ENCODE measurements at regions of chr13 and their contacts with region 1.

Region 1: GRCh38 chr13:77751513-77752456 is 54.3 kb downstream of the SLAIN1 start:
- DNase-seq: peak in 7 of 9 donors; percentile 22 to 63 (median 56)
- ATAC-seq: peak; percentile 86
- H3K4me3 ChIP-seq: no peak overlapping the region
- H3K4me3 Mint-ChIP-seq: no peak overlapping the region
- H3K27ac ChIP-seq: no peak overlapping the region
- H3K27ac Mint-ChIP-seq: peak overlapping the region in 3 of 9 donors; percentile 10 to 77 (median 43)
- H3K4me1 ChIP-seq: peaks cover 0 to 4% of the 10 kb centered on the region in 2 donors
- H3K4me1 Mint-ChIP-seq: peaks cover 9 to 34% (median 18%) of the 10 kb centered on the region in 7 donors
- H3K27me3 ChIP-seq: no peaks in the 10 kb centered on the region
- H3K27me3 Mint-ChIP-seq: no peaks in the 10 kb centered on the region

Region 2: GRCh38 chr13:77274126-77274525 is 477.7 kb before region 1 on chr13:
- CTCF ChIA-PET with region 1: no interaction called
- POLR2A ChIA-PET with region 1: no interaction called
- intact Hi-C with region 1: loop called in 1 of 2 experiments (anchors 5 kb)
- DNase-seq: peak in 1 of 9 donors; percentile 6
- ATAC-seq: no peak
- H3K4me3 ChIP-seq: no peak overlapping the region
- H3K4me3 Mint-ChIP-seq: no peak overlapping the region
- H3K27ac ChIP-seq: no peak overlapping the region
- H3K27ac Mint-ChIP-seq: peak overlapping the region in 2 of 9 donors; percentile 19 to 73
- H3K4me1 ChIP-seq: no peaks in the 10 kb centered on the region
- H3K4me1 Mint-ChIP-seq: peaks cover 0 to 36% (median 18%) of the 10 kb centered on the region in 7 donors
- H3K27me3 ChIP-seq: no peaks in the 10 kb centered on the region
- H3K27me3 Mint-ChIP-seq: no peaks in the 10 kb centered on the region

Region 3: DNA sequence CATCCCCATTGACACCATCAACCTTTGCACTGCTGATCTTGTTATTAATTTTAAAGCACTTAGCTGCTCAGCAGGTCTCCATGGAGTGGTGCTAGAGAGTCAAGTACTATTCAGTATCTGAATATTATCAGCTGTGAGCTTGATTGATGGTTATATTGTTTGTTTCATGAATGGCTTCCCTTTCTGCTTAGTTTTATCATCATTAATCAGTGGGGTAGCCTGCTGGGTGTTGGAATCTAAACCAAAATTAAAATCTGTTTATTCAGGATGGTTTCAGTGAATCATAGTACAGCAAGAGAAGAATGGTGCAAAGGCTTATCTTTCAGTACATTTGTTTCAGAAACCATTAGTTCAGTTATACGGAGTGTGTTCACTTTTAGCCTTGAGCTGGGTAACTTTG is 258.8 kb before region 1 on chr13:
- CTCF ChIA-PET with region 1: interaction called, 4 read pairs
- POLR2A ChIA-PET with region 1: no interaction called
- intact Hi-C with region 1: loop called (anchors 1 to 2 kb)
- DNase-seq: peak in 2 of 9 donors; percentile 16 to 22
- ATAC-seq: peak; percentile 38
- H3K4me3 ChIP-seq: no peak overlapping the region
- H3K4me3 Mint-ChIP-seq: no peak overlapping the region
- H3K27ac ChIP-seq: no peak overlapping the region
- H3K27ac Mint-ChIP-seq: no peak overlapping the region
- H3K4me1 ChIP-seq: no peaks in the 10 kb centered on the region
- H3K4me1 Mint-ChIP-seq: peaks cover 0 to 1% (median 0%) of the 10 kb centered on the region in 7 donors
- H3K27me3 ChIP-seq: no peaks in the 10 kb centered on the region
- H3K27me3 Mint-ChIP-seq: peaks cover 0 to 6% (median 0%) of the 10 kb centered on the region in 5 donors

Region 4: DNA sequence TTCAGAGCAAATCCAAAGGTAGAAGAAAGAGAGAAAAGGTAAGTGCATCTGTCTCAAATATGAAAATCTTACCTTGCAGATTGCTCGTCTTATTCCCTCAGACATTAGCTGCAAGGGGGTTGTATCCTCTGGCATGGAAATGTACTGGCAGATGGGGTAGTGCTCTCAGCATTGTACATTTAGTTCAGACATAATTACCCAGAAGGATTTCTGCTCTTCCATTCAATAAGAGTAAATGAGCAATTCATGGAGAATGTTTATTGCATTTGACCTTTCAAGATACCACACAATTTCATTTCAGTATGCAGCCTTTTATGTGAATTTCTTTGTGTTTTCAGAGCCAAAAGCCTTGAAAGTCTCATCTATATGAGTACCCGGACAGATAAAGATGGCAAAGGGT is 152.4 kb before region 1 on chr13:
- CTCF ChIA-PET with region 1: interaction called, 13 read pairs
- POLR2A ChIA-PET with region 1: no interaction called
- intact Hi-C with region 1: no loop called
- DNase-seq: no peak
- ATAC-seq: no peak
- H3K4me3 ChIP-seq: no peak overlapping the region
- H3K4me3 Mint-ChIP-seq: no peak overlapping the region
- H3K27ac ChIP-seq: no peak overlapping the region
- H3K27ac Mint-ChIP-seq: no peak overlapping the region
- H3K4me1 ChIP-seq: no peaks in the 10 kb centered on the region
- H3K4me1 Mint-ChIP-seq: no peaks in the 10 kb centered on the region
- H3K27me3 ChIP-seq: peaks cover 0 to 1% of the 10 kb centered on the region in 2 donors
- H3K27me3 Mint-ChIP-seq: peaks cover under 1 to 19% (median 17%) of the 10 kb centered on the region in 5 donors

Region 5: DNA sequence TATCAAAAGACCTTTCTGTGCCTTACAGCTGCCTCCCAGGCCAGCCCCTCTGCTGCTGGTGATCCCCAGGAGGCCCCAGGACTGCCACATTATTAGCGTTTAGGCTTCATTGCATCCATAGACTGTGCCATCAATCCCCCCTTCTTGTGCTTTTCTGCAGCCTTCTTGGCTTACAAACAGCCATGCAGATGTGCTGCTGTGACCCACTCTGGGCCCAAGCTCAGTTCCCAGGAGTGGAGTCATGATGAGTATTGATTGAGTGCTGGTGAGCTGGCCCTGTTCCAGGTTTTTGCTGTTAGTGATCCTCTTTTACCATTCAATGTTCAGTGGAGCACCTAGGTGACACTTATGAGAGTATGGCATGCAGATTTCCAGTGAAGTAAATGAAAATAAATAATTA is 114.2 kb before region 1 on chr13:
- CTCF ChIA-PET with region 1: no interaction called
- POLR2A ChIA-PET with region 1: no interaction called
- intact Hi-C with region 1: no loop called
- DNase-seq: no peak
- ATAC-seq: no peak
- H3K4me3 ChIP-seq: no peak overlapping the region
- H3K4me3 Mint-ChIP-seq: no peak overlapping the region
- H3K27ac ChIP-seq: no peak overlapping the region
- H3K27ac Mint-ChIP-seq: no peak overlapping the region
- H3K4me1 ChIP-seq: no peaks in the 10 kb centered on the region
- H3K4me1 Mint-ChIP-seq: no peaks in the 10 kb centered on the region
- H3K27me3 ChIP-seq: no peaks in the 10 kb centered on the region
- H3K27me3 Mint-ChIP-seq: no peaks in the 10 kb centered on the region

Region 6: DNA sequence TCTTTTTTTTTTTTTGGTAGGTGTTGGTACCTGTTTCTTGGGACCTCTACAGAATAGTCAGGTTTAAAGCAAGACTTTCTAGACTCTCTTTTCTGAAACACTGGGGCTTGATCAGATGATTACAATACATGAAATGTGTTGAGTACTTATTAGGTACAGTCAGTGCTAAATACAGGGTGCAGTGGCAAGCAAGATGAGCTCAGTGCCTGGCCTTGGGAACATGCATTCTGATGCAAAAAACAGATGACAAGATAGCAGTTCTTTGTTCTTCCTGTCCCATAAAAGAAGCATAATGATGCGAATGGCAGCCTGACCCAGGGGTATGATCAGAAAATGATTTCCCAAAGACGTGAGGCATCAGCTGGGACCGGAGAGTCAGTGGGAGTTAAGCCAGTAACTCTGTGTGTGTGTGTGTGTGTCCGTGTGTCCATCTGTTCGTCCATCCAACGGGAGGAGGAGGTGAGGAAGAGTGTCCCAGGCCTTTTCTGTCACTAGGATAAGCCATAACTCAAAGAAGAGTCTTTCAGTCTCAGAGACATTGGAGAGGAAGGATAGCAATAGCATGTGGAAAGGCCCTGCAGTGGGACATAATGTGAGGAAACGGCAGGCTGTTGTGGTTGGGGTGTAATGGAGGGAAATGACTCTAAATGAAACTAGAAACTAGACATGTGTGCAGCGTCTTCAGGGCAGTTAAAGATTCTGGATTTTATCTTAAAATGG is 22.1 kb before region 1 on chr13:
- CTCF ChIA-PET with region 1: no interaction called
- POLR2A ChIA-PET with region 1: no interaction called
- intact Hi-C with region 1: loop called in 1 of 2 experiments (anchors 2 kb)
- DNase-seq: peak in 1 of 9 donors; percentile 44
- ATAC-seq: peak; percentile 40
- H3K4me3 ChIP-seq: no peak overlapping the region
- H3K4me3 Mint-ChIP-seq: peak overlapping the region in 2 of 10 donors; percentile 3 to 81
- H3K27ac ChIP-seq: no peak overlapping the region
- H3K27ac Mint-ChIP-seq: peak overlapping the region in 4 of 9 donors; percentile 3 to 88 (median 20)
- H3K4me1 ChIP-seq: peaks cover 0 to 4% of the 10 kb centered on the region in 2 donors
- H3K4me1 Mint-ChIP-seq: peaks cover 22 to 51% (median 34%) of the 10 kb centered on the region in 7 donors
- H3K27me3 ChIP-seq: no peaks in the 10 kb centered on the region
- H3K27me3 Mint-ChIP-seq: no peaks in the 10 kb centered on the region

Region 7: GRCh38 chr13:78700121-78700910 is 948.5 kb after region 1 on chr13:
- CTCF ChIA-PET with region 1: no interaction called
- POLR2A ChIA-PET with region 1: no interaction called
- intact Hi-C with region 1: no loop called
- DNase-seq: no peak
- ATAC-seq: no peak
- H3K4me3 ChIP-seq: no peak overlapping the region
- H3K4me3 Mint-ChIP-seq: no peak overlapping the region
- H3K27ac ChIP-seq: no peak overlapping the region
- H3K27ac Mint-ChIP-seq: no peak overlapping the region
- H3K4me1 ChIP-seq: no peaks in the 10 kb centered on the region
- H3K4me1 Mint-ChIP-seq: no peaks in the 10 kb centered on the region
- H3K27me3 ChIP-seq: no peaks in the 10 kb centered on the region
- H3K27me3 Mint-ChIP-seq: peaks cover 2 to 28% (median 20%) of the 10 kb centered on the region in 5 donors